ENCODE measurements at regions of chr22 and their contacts with region 1.

Region 1: DNA sequence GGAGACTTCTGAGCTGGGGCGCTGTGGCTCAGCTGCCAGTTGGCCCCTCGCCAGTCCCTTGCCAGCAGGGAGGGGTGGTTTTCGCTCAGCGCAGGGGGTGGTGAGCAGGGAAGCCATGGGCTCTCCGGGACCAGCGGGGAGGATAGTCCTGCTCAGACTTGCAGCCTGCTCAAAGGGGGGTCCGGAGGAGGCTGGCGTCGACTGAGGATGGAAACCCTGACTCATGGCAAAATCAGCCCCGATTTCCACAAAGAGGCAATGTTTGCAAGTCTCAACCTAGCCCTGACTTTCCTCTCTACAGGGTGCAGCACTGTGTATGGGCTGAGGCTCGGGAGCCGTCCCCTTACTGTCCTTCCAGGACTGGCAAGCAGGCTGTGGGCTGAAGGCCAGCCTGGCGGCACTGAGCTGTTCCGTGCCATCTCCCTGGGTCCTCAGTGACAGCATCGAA is 35.1 kb downstream of the FBLN1 start:
- DNase-seq: peak; percentile 59
- H3K4me3 ChIP-seq: no peak overlapping the region
- H3K27ac ChIP-seq: peak overlapping the region; percentile 61
- H3K27me3 ChIP-seq: no peaks in the 10 kb centered on the region
- CTCF ChIP-seq: no peak

Region 2: GRCh38 chr22:45502215-45503049 is 35.3 kb before region 1 on chr22 and contains the start of gene FBLN1:
- CTCF ChIA-PET with region 1: interaction called, 8 read pairs
- POLR2A ChIA-PET with region 1: interaction called, 15 read pairs
- DNase-seq: no peak
- H3K4me3 ChIP-seq: peak within 1 kb of the TSS; percentile 95
- H3K27ac ChIP-seq: peak within 1 kb of the TSS; percentile 82
- H3K27me3 ChIP-seq: no peaks in the 10 kb centered on the region
- CTCF ChIP-seq: peak; percentile 23; the same call in 1 of the 2 replicates
- polyA plus RNA-seq, gene FBLN1: 241 and 314 TPM in 2 replicates